ENCODE measurements at regions of chr3 and their contacts with region 1.

Region 1: DNA sequence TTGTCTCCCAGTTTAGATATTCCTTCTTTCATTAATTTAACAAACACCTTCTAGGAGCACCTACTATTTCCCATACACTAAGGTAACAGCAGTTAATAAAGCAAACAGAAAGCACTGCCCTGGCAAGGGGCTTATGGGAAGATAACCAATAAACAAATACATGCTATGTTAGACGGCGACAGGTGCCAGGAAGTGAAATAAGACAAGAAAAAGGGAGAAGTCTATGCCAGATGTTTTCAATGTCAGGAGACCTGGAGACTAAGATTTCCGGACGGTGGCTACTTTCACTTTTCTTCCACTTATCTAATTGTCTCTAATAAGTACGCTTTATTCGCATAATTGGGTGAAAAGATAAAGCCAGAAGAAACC is 32.5 kb upstream of the ZNF445 start:
- DNase-seq: peak in 4 of 14 experiments; percentile 14 to 44 (median 40)
- ATAC-seq: peak; percentile 25
- H3K4me3 ChIP-seq: peak overlapping the region; percentile 91
- H3K4me3 Mint-ChIP-seq: peak overlapping the region; percentile 100
- H3K27ac ChIP-seq: peak overlapping the region; percentile 74 to 79
- H3K27ac Mint-ChIP-seq: peak overlapping the region; percentile 88
- H3K4me1 ChIP-seq: peaks cover 25% of the 10 kb centered on the region
- H3K4me1 Mint-ChIP-seq: peaks cover 51% of the 10 kb centered on the region
- H3K27me3 ChIP-seq: no peaks in the 10 kb centered on the region
- H3K27me3 Mint-ChIP-seq: no peaks in the 10 kb centered on the region
- CTCF ChIP-seq: no peak

Region 2: DNA sequence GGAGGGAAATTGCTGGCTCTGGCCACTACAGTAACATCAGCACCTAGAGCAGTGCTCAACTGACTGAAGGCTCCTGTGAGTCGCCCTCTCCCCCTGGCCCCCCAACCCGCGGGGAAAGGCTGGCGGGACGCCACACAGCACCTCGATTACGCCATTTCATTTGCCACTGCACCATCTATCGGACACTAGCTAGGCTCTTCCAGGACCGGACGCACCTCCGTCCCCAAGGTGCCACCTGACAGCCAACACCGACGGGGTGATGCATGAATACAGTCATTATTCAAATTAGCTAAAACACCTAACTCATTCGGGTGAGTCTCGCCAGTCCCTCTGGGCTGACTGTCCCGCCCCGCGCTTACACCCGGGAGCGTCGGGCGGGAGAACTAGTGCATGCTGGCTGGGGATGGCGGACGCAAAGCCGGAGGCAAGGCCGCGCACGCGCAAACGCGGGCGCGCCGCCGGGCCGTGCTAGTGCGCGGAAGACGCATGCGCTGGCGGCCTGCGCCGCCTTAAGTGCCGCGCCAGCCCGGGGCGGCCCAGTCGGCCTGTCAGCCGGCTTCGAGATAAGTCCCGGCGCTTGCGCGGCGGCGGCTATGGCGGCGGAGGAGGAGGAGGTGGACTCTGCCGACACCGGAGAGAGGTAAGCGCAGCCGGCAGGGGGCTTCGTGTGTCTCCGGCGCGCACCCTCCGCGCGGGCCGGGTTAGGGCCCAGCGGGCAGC is 819.4 kb before region 1 on chr3 and contains the start of gene ABHD5:
- CTCF ChIA-PET with region 1: no interaction called
- POLR2A ChIA-PET with region 1: no interaction called
- intact Hi-C with region 1: loop called in 1 of 2 experiments (anchors 5 kb)
- DNase-seq: peak; percentile 92 to 99 (median 97)
- ATAC-seq: peak; percentile 92
- H3K4me3 ChIP-seq: peak within 1 kb of the TSS; percentile 64
- H3K4me3 Mint-ChIP-seq: peak within 1 kb of the TSS; percentile 96
- H3K27ac ChIP-seq: peak within 1 kb of the TSS; percentile 59 to 67
- H3K27ac Mint-ChIP-seq: peak within 1 kb of the TSS; percentile 93
- H3K4me1 ChIP-seq: peaks cover 18% of the 10 kb centered on the region
- H3K4me1 Mint-ChIP-seq: peaks cover 33% of the 10 kb centered on the region
- H3K27me3 ChIP-seq: no peaks in the 10 kb centered on the region
- H3K27me3 Mint-ChIP-seq: no peaks in the 10 kb centered on the region
- CTCF ChIP-seq: peak; percentile 48
- total RNA-seq, gene ABHD5: 6.4 to 9.3 TPM

Region 3: GRCh38 chr3:43870120-43870519 is 639.9 kb before region 1 on chr3:
- CTCF ChIA-PET with region 1: no interaction called
- POLR2A ChIA-PET with region 1: no interaction called
- intact Hi-C with region 1: no loop called
- DNase-seq: no peak
- ATAC-seq: no peak
- H3K4me3 ChIP-seq: no peak overlapping the region
- H3K4me3 Mint-ChIP-seq: no peak overlapping the region
- H3K27ac ChIP-seq: no peak overlapping the region
- H3K27ac Mint-ChIP-seq: no peak overlapping the region
- H3K4me1 ChIP-seq: no peaks in the 10 kb centered on the region
- H3K4me1 Mint-ChIP-seq: no peaks in the 10 kb centered on the region
- H3K27me3 ChIP-seq: peaks cover 8 to 16% of the 10 kb centered on the region in 2 experiments
- H3K27me3 Mint-ChIP-seq: peaks cover 42% of the 10 kb centered on the region
- CTCF ChIP-seq: no peak

Region 4: GRCh38 chr3:44477312-44478030 is 32.5 kb before region 1 on chr3 and contains the start of gene ZNF445:
- CTCF ChIA-PET with region 1: no interaction called
- POLR2A ChIA-PET with region 1: interaction called, 27 read pairs
- intact Hi-C with region 1: loop called (anchors 1 kb)
- DNase-seq: peak; percentile 53 to 90 (median 72)
- ATAC-seq: peak; percentile 87
- H3K4me3 ChIP-seq: peak within 1 kb of the TSS; percentile 65
- H3K4me3 Mint-ChIP-seq: peak within 1 kb of the TSS; percentile 97
- H3K27ac ChIP-seq: peak within 1 kb of the TSS in 1 of 2 donors; percentile 56
- H3K27ac Mint-ChIP-seq: peak within 1 kb of the TSS; percentile 93
- H3K4me1 ChIP-seq: peaks cover 19% of the 10 kb centered on the region
- H3K4me1 Mint-ChIP-seq: peaks cover 39% of the 10 kb centered on the region
- H3K27me3 ChIP-seq: no peaks in the 10 kb centered on the region
- H3K27me3 Mint-ChIP-seq: no peaks in the 10 kb centered on the region
- CTCF ChIP-seq: no peak
- total RNA-seq, gene ZNF445: 6.1 to 6.6 TPM

Region 5: GRCh38 chr3:44624749-44625480 is 114.9 kb after region 1 on chr3 and contains the start of gene ZNF197:
- CTCF ChIA-PET with region 1: no interaction called
- POLR2A ChIA-PET with region 1: interaction called, 9 read pairs
- intact Hi-C with region 1: loop called in 1 of 2 experiments (anchors 10 kb)
- DNase-seq: peak; percentile 7 to 70 (median 36)
- ATAC-seq: peak; percentile 56
- H3K4me3 ChIP-seq: peak within 1 kb of the TSS; percentile 93
- H3K4me3 Mint-ChIP-seq: peak within 1 kb of the TSS; percentile 93
- H3K27ac ChIP-seq: no peak within 1 kb of the TSS
- H3K27ac Mint-ChIP-seq: peak within 1 kb of the TSS; percentile 82
- H3K4me1 ChIP-seq: peaks cover 18% of the 10 kb centered on the region
- H3K4me1 Mint-ChIP-seq: peaks cover 54% of the 10 kb centered on the region
- H3K27me3 ChIP-seq: no peaks in the 10 kb centered on the region
- H3K27me3 Mint-ChIP-seq: no peaks in the 10 kb centered on the region
- CTCF ChIP-seq: no peak
- total RNA-seq, gene ZNF197: 3.2 to 3.5 TPM

Region 6: GRCh38 chr3:44861412-44862220 is 351.6 kb after region 1 on chr3 and contains the start of gene TMEM42:
- CTCF ChIA-PET with region 1: no interaction called
- POLR2A ChIA-PET with region 1: interaction called, 3 read pairs
- intact Hi-C with region 1: loop called in 1 of 2 experiments (anchors 2 kb)
- DNase-seq: peak; percentile 72 to 95 (median 82)
- ATAC-seq: peak; percentile 91
- H3K4me3 ChIP-seq: peak within 1 kb of the TSS; percentile 76
- H3K4me3 Mint-ChIP-seq: peak within 1 kb of the TSS; percentile 91
- H3K27ac ChIP-seq: peak within 1 kb of the TSS; percentile 72 to 80
- H3K27ac Mint-ChIP-seq: peak within 1 kb of the TSS; percentile 88
- H3K4me1 ChIP-seq: peaks cover 42% of the 10 kb centered on the region
- H3K4me1 Mint-ChIP-seq: peaks cover 48% of the 10 kb centered on the region
- H3K27me3 ChIP-seq: no peaks in the 10 kb centered on the region
- H3K27me3 Mint-ChIP-seq: no peaks in the 10 kb centered on the region
- CTCF ChIP-seq: no peak
- total RNA-seq, gene TMEM42: 6.8 to 8.0 TPM